Activated CD4-positive, alpha-beta memory T cell treated with anti-CD3 and anti-CD28 coated beads for 36 hours (primary cell): ENCODE measurements at regions of chr16 and their contacts with region 1.

Region 1: DNA sequence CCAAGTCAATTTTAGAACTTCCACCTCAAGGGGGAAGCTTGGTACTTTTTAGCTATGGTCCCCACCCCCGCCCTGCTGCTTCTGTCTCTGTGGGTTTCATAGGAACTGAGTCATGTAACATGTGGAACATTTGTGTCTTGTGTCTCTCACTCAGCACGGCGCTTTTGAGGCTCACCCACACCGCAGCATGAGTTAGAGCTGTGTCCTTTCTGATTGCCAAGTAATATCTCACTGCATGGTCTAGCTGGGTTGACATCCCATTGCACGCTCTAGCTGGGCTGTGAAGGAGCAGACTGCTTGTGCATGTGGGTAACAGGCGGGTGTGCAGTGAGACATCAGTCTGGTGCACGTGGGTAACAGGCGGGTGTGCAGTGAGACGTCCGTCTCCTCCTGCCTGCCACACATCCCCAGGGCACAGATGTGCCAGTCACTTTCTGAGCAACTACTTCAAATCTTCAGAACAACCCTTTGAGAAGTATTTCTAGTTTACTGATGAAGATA is 26.4 kb upstream of the SLC7A5 start:
- DNase-seq: peak; percentile 96
- H3K4me3 Mint-ChIP-seq: peak overlapping the region; percentile 58
- H3K27ac Mint-ChIP-seq: peak overlapping the region; percentile 99
- H3K4me1 Mint-ChIP-seq: peaks cover 51% of the 10 kb centered on the region
- H3K27me3 Mint-ChIP-seq: no peaks in the 10 kb centered on the region

Region 2: GRCh38 chr16:87853411-87854052 is 42.2 kb before region 1 on chr16:
- CTCF ChIA-PET with region 1: interaction called, 10 read pairs
- POLR2A ChIA-PET with region 1: no interaction called
- intact Hi-C with region 1: loop called (anchors 10 kb)
- DNase-seq: peak; percentile 95
- H3K4me3 Mint-ChIP-seq: peak overlapping the region; percentile 53
- H3K27ac Mint-ChIP-seq: peak overlapping the region; percentile 88
- H3K4me1 Mint-ChIP-seq: peaks cover 60% of the 10 kb centered on the region
- H3K27me3 Mint-ChIP-seq: no peaks in the 10 kb centered on the region

Region 3: GRCh38 chr16:87860553-87861299 is 35.0 kb before region 1 on chr16:
- CTCF ChIA-PET with region 1: no interaction called
- POLR2A ChIA-PET with region 1: interaction called, 103 read pairs
- intact Hi-C with region 1: loop called (anchors 10 kb)
- DNase-seq: peak; percentile 39
- H3K4me3 Mint-ChIP-seq: peak overlapping the region; percentile 56
- H3K27ac Mint-ChIP-seq: peak overlapping the region; percentile 81
- H3K4me1 Mint-ChIP-seq: peaks cover 80% of the 10 kb centered on the region
- H3K27me3 Mint-ChIP-seq: no peaks in the 10 kb centered on the region

Region 4: DNA sequence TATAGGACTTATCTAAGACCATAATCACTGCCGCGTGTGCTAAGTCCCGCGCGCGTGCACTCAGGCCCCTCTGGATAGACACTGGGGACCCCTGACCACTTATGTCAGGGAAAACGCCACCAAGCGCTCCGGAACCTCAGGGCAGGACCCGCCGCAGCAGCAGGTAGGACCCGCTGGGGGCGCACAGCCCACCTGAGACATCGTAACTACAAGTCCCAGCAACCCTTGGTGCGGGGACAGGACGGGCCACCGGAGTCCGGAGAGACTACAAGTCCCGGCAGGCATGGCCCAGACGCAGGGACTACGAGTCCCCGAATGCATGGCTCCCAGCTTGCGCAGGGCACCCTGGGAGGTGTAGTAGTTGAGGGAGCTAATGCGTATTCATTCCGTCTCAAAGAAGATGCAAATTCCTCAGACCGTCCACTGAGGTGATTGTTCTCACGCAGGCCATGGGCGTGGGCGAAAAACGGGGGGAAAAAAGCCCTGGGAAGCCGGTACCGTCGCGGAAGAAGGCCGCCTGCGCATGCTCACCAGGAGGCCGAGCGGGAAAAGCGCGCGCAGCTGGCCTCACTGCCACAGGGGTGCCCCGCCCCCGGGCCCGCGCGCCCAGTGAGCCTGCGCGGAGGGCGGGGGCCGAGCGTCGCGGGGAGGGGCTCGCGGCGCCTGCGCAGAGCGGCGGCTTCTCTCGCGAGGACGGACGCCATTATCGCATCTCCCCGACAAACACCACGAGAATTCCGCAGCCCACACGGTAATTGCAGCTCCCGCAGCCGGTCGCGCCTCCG is 55.3 kb after region 1 on chr16 and contains the start of gene BANP:
- CTCF ChIA-PET with region 1: no interaction called
- POLR2A ChIA-PET with region 1: interaction called, 7 read pairs
- intact Hi-C with region 1: loop called (anchors 2 kb)
- DNase-seq: peak; percentile 98
- H3K4me3 Mint-ChIP-seq: peak within 1 kb of the TSS; percentile 96
- H3K27ac Mint-ChIP-seq: peak within 1 kb of the TSS; percentile 100
- H3K4me1 Mint-ChIP-seq: peaks cover 43% of the 10 kb centered on the region
- H3K27me3 Mint-ChIP-seq: peaks cover 2% of the 10 kb centered on the region
- total RNA-seq, gene BANP: 29.6 to 30.6 TPM

Region 5: GRCh38 chr16:87956365-87957231 is 60.9 kb after region 1 on chr16:
- CTCF ChIA-PET with region 1: no interaction called
- POLR2A ChIA-PET with region 1: interaction called, 7 read pairs
- intact Hi-C with region 1: loop called (anchors 2 kb)
- DNase-seq: peak; percentile 90
- H3K4me3 Mint-ChIP-seq: peak overlapping the region; percentile 77
- H3K27ac Mint-ChIP-seq: peak overlapping the region; percentile 99
- H3K4me1 Mint-ChIP-seq: peaks cover 86% of the 10 kb centered on the region
- H3K27me3 Mint-ChIP-seq: no peaks in the 10 kb centered on the region

Region 6: GRCh38 chr16:88393034-88393433 is 497.3 kb after region 1 on chr16:
- CTCF ChIA-PET with region 1: no interaction called
- POLR2A ChIA-PET with region 1: no interaction called
- intact Hi-C with region 1: no loop called
- DNase-seq: no peak
- H3K4me3 Mint-ChIP-seq: no peak overlapping the region
- H3K27ac Mint-ChIP-seq: no peak overlapping the region
- H3K4me1 Mint-ChIP-seq: no peaks in the 10 kb centered on the region
- H3K27me3 Mint-ChIP-seq: peaks cover 3% of the 10 kb centered on the region

Region 7: DNA sequence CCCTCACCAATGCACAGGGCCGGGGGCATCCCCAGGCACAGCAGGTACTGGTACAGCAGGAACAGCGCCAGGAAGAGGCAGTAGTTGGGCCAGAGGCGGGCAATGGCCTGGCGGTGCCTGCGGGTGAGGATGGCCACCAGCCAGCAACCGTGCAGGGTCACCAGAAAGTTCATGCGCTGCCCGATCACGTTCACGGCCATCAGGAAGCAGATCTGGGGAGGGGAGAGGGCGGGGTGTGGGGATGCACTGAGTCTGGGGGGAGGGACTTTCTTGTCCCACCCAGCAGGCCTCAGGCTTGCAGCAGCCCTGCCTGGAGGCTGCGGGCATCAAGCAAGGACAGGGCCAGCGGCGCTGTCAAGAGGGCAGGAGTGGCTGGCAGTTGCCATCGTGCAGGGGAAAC is 836.0 kb after region 1 on chr16:
- CTCF ChIA-PET with region 1: no interaction called
- POLR2A ChIA-PET with region 1: no interaction called
- intact Hi-C with region 1: no loop called
- DNase-seq: no peak
- H3K4me3 Mint-ChIP-seq: no peak overlapping the region
- H3K27ac Mint-ChIP-seq: no peak overlapping the region
- H3K4me1 Mint-ChIP-seq: no peaks in the 10 kb centered on the region
- H3K27me3 Mint-ChIP-seq: no peaks in the 10 kb centered on the region